ENCODE measurements at regions of chr4 and their contacts with region 1.

Region 1: DNA sequence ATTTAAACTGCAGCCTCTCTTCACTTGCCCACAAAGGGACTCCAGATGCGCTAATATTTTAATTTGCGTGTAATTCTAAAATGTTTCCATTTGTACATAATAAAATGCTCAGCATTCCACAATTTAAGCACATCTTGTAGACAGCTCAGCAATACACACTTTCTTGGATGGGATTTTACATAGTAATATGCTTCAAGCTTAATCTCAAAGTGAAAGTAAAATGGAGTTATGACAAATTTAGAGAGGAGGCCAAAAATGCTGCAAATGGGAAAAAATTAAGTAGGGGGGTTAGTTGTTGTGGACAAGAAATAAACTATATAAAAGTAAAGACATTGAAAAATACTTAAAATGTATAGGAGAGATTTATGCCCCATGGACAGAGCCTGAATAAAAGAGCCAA is 149.1 kb downstream of the FBXO8 start:
- DNase-seq: no peak

Region 2: GRCh38 chr4:173181769-173182354 is 952.5 kb before region 1 on chr4:
- intact Hi-C with region 1: no loop called
- DNase-seq: no peak

Region 3: GRCh38 chr4:174096999-174097398 is 37.4 kb before region 1 on chr4:
- intact Hi-C with region 1: loop called in 1 of 2 experiments (anchors 1 kb)
- DNase-seq: no peak